Naive thymus-derived CD4-positive, alpha-beta T cell (primary cell): ENCODE measurements at regions of chr19 and their contacts with region 1.

Region 1: DNA sequence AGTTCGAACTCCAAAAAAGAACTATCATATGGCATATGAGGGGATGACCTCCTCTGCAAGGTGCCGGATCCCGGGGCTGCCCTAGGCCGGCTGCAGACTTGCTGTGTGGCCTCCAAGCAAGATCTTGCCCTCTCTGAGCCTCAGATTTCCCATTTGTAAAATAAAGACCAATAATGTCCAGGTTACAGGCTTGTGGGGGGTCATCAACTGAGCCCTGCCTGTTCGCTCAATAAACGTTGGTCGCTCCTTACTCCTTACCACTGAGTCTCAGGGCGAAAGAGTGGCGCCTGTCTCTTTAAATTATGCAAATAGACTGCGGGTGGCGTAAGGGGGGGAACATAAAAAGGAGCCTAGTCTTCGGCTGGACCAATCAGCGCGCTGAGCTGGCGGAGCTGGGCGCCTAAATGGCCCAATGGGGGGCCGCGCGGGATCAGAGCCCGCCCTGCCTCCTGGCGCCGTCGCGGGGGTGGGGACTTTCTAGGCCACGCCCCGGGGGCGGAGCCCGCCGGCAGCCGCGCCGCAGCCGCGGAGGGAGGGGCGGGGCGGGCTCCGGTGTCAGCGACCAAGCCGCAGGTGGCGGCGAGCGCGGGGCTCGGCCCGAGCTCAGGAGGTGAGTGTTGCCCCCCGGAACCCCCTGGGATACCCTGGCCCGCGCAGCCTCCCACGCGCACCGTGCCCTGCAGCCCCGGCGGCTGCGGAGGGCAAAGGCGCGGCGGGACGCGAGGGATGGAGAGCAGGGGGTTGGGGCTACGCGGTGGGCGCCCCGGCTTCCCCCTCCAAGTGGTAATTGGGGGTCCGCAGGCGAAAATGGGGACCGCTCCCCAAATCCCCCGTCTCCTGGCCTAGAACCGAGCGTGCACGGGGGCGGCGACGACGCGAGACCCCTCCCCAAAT is 3.8 kb upstream of the FCHO1 start:
- DNase-seq: peak; percentile 90 to 99 (median 95)
- ATAC-seq: peak; percentile 96
- H3K4me3 ChIP-seq: peak overlapping the region; percentile 59
- H3K4me3 Mint-ChIP-seq: peak overlapping the region; percentile 87 to 100 (median 94)
- H3K27ac ChIP-seq: peak overlapping the region; percentile 73
- H3K27ac Mint-ChIP-seq: peak overlapping the region; percentile 14 to 88 (median 72)
- H3K4me1 ChIP-seq: peaks cover 31 to 37% of the 10 kb centered on the region in 2 donors
- H3K4me1 Mint-ChIP-seq: peaks cover 35 to 49% (median 39%) of the 10 kb centered on the region in 7 donors
- H3K27me3 ChIP-seq: no peaks in the 10 kb centered on the region
- H3K27me3 Mint-ChIP-seq: no peaks in the 10 kb centered on the region

Region 2: GRCh38 chr19:17539238-17540117 is 208.0 kb before region 1 on chr19:
- CTCF ChIA-PET with region 1: no interaction called
- POLR2A ChIA-PET with region 1: no interaction called
- intact Hi-C with region 1: loop called in 1 of 2 experiments (anchors 2 kb)
- DNase-seq: peak; percentile 87 to 99 (median 94)
- ATAC-seq: peak; percentile 100
- H3K4me3 ChIP-seq: peak overlapping the region; percentile 68
- H3K4me3 Mint-ChIP-seq: peak overlapping the region; percentile 84 to 90 (median 86)
- H3K27ac ChIP-seq: peak overlapping the region; percentile 67
- H3K27ac Mint-ChIP-seq: peak overlapping the region; percentile 16 to 81 (median 62)
- H3K4me1 ChIP-seq: peaks cover 9 to 10% of the 10 kb centered on the region in 2 donors
- H3K4me1 Mint-ChIP-seq: peaks cover 7 to 23% (median 16%) of the 10 kb centered on the region in 7 donors
- H3K27me3 ChIP-seq: no peaks in the 10 kb centered on the region
- H3K27me3 Mint-ChIP-seq: peaks cover 0 to 34% (median 0%) of the 10 kb centered on the region in 5 donors

Region 3: GRCh38 chr19:17718947-17719711 is 28.3 kb before region 1 on chr19 and contains the start of gene MAP1S:
- CTCF ChIA-PET with region 1: interaction called, 3 read pairs
- POLR2A ChIA-PET with region 1: interaction called, 13 read pairs
- intact Hi-C with region 1: loop called (anchors 1 kb)
- DNase-seq: peak; percentile 26 to 82 (median 51)
- ATAC-seq: peak; percentile 85
- H3K4me3 ChIP-seq: peak within 1 kb of the TSS; percentile 71
- H3K4me3 Mint-ChIP-seq: peak within 1 kb of the TSS; percentile 85 to 93 (median 90)
- H3K27ac ChIP-seq: peak within 1 kb of the TSS; percentile 76
- H3K27ac Mint-ChIP-seq: peak within 1 kb of the TSS; percentile 75 to 96 (median 88)
- H3K4me1 ChIP-seq: peaks cover 19 to 24% of the 10 kb centered on the region in 2 donors
- H3K4me1 Mint-ChIP-seq: peaks cover 33 to 39% (median 36%) of the 10 kb centered on the region in 7 donors
- H3K27me3 ChIP-seq: no peaks in the 10 kb centered on the region
- H3K27me3 Mint-ChIP-seq: peaks cover 0 to 2% (median 0%) of the 10 kb centered on the region in 5 donors
- total RNA-seq, gene MAP1S: 28.6 to 73.8 (median 52.5) TPM

Region 4: GRCh38 chr19:17775245-17775916 is 27.9 kb after region 1 on chr19:
- CTCF ChIA-PET with region 1: interaction called, 4 read pairs
- POLR2A ChIA-PET with region 1: no interaction called
- intact Hi-C with region 1: loop called in 1 of 2 experiments (anchors 1 kb)
- DNase-seq: peak in 2 of 9 donors; percentile 25 to 38
- ATAC-seq: peak; percentile 24
- H3K4me3 ChIP-seq: no peak overlapping the region
- H3K4me3 Mint-ChIP-seq: no peak overlapping the region
- H3K27ac ChIP-seq: no peak overlapping the region
- H3K27ac Mint-ChIP-seq: no peak overlapping the region
- H3K4me1 ChIP-seq: no peaks in the 10 kb centered on the region
- H3K4me1 Mint-ChIP-seq: peaks cover 0 to 18% (median 9%) of the 10 kb centered on the region in 7 donors
- H3K27me3 ChIP-seq: no peaks in the 10 kb centered on the region
- H3K27me3 Mint-ChIP-seq: no peaks in the 10 kb centered on the region

Region 5: DNA sequence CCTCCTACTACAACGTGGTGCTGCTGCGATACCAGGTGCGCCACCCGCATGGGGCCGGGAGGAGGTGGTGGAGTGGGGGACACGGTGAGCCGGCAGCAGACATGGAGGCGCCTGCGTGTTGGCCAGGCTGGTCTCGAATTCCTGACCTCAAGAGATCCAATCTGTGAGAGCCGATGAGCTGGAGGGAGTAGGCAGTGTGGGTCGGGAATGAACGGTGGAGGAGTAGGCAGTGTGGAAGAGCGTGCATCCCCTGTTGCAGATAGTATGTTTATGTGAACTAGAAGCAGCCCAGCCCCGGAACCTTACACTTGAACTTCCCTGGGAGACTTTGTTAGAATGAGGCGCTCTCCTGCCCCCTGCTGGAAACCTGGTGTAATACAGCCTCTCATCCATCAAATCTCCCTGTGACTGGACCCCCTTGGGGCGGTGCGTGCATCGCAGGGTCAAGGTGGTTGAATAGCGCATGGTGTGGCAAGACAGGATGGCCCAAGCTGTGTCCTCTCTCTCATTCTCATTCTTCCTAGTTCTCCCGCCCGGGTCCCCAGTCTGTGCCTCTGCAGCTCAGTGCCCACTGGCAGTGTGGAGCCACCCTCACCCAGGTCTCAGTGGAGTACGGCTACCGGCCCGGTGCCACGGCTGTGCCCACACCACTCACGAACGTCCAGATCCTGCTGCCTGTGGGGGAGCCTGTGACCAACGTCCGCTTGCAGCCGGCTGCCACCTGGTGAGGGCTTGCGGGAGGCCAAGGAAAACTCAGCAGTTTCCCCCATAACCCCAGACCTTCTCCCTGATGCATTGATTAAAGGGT is 37.0 kb after region 1 on chr19:
- CTCF ChIA-PET with region 1: interaction called, 4 read pairs
- POLR2A ChIA-PET with region 1: no interaction called
- intact Hi-C with region 1: loop called in 1 of 2 experiments (anchors 1 kb)
- DNase-seq: peak; percentile 56 to 81 (median 73)
- ATAC-seq: peak; percentile 90
- H3K4me3 ChIP-seq: no peak overlapping the region
- H3K4me3 Mint-ChIP-seq: no peak overlapping the region
- H3K27ac ChIP-seq: no peak overlapping the region
- H3K27ac Mint-ChIP-seq: peak overlapping the region in 8 of 9 donors; percentile 13 to 94 (median 56)
- H3K4me1 ChIP-seq: peaks cover 0 to 6% of the 10 kb centered on the region in 2 donors
- H3K4me1 Mint-ChIP-seq: peaks cover 10 to 22% (median 18%) of the 10 kb centered on the region in 7 donors
- H3K27me3 ChIP-seq: no peaks in the 10 kb centered on the region
- H3K27me3 Mint-ChIP-seq: no peaks in the 10 kb centered on the region

Region 6: GRCh38 chr19:17841810-17842662 is 94.6 kb after region 1 on chr19:
- CTCF ChIA-PET with region 1: no interaction called
- POLR2A ChIA-PET with region 1: no interaction called
- intact Hi-C with region 1: no loop called
- DNase-seq: peak in 7 of 9 donors; percentile 33 to 66 (median 49)
- ATAC-seq: peak; percentile 80
- H3K4me3 ChIP-seq: no peak overlapping the region
- H3K4me3 Mint-ChIP-seq: peak overlapping the region in 2 of 10 donors; percentile 14 to 18
- H3K27ac ChIP-seq: peak overlapping the region; percentile 95
- H3K27ac Mint-ChIP-seq: peak overlapping the region in 4 of 9 donors; percentile 30 to 72 (median 48)
- H3K4me1 ChIP-seq: peaks cover 35% of the 10 kb centered on the region in 2 donors
- H3K4me1 Mint-ChIP-seq: peaks cover 26 to 57% (median 34%) of the 10 kb centered on the region in 7 donors
- H3K27me3 ChIP-seq: no peaks in the 10 kb centered on the region
- H3K27me3 Mint-ChIP-seq: no peaks in the 10 kb centered on the region